Activated CD8-positive, alpha-beta T cell treated with anti-CD3 and anti-CD28 coated beads, Interleukin-2, amount 10 ng/mL, durations not matched to agents 7 days and 5 days (primary cell): ENCODE measurements at regions of chr2 and their contacts with region 1.

Region 1: DNA sequence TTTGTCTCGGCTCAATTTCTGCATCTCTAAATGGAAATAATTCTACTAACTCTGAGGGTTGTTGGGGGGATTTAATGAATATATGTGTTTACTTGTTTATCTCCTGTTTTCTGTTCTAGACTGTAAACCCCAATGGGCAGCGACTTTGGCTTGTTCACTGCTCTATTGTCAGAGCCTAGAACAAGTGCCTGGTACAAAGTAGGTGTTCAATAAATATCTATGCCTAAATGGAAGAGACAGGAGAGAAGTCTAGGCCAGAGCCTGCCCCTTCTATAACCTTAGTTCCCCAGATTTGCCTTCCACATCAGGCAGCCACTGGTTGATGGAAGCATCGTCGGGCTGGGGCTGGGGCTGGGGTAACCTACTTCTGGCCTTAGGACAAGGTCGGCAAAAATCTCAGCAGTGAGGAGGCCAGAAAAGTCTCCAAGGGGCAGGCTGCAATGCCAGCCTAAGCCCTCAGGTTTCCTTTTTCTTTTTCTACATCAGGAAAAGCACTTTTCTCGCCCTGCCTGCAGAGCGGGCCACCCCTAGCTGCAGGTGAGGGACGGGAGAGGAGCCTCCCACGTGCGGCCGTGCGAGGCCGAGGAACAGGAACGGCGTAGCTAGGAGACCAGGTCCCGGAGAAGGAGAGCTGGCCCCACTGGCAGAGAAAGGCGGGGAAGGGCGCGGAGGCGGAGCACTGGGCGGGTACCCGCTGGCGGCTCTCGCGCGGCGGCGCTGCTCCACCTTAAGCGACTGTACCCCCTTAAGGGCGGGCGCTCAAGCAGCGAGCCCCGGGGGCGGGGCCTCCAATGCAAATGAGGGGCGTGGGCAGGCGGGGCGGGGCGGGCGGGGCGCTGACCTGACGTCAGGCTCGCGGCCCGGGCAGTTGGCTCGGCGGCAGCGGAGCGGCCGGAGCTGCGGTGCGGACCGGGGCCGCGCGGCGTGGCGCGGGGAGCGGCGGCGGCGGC is at the start of gene CNNM4:
- DNase-seq: peak; percentile 94
- ATAC-seq: peak; percentile 96
- H3K4me3 Mint-ChIP-seq: peak within 1 kb of the TSS; percentile 78
- H3K27ac Mint-ChIP-seq: peak within 1 kb of the TSS; percentile 87
- H3K4me1 Mint-ChIP-seq: peaks cover 46% of the 10 kb centered on the region
- H3K27me3 Mint-ChIP-seq: no peaks in the 10 kb centered on the region
- total RNA-seq, gene CNNM4: 7.1 TPM

Region 2: GRCh38 chr2:96739633-96740428 is 20.5 kb before region 1 on chr2 and contains the start of gene LMAN2L:
- CTCF ChIA-PET with region 1: interaction called, 15 read pairs
- POLR2A ChIA-PET with region 1: interaction called, 3 read pairs
- DNase-seq: peak; percentile 100
- ATAC-seq: peak; percentile 100
- H3K4me3 Mint-ChIP-seq: peak within 1 kb of the TSS; percentile 92
- H3K27ac Mint-ChIP-seq: peak within 1 kb of the TSS; percentile 86
- H3K4me1 Mint-ChIP-seq: peaks cover 39% of the 10 kb centered on the region
- H3K27me3 Mint-ChIP-seq: no peaks in the 10 kb centered on the region
- total RNA-seq, gene LMAN2L: 7.4 to 7.9 TPM

Region 3: DNA sequence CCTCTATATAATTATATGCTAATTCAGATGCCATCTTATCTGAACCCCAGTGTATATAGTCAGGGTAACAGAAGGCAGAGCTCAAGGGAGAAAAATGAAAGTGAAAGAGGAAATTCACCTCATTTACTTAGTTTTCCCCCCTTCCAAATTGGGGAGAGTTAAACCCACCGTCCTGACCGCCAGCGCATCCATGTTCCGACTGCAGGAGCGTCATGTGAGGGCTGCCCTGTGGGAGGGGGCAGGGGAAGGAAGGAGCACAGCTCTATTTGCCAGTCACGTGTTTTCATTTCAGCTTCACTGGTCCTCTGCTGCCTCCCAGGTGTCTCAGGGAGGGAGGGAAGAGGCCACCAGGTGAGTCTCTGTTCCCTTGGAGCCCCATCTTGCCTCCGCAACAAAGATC is 13.6 kb after region 1 on chr2:
- CTCF ChIA-PET with region 1: interaction called, 112 read pairs
- POLR2A ChIA-PET with region 1: interaction called, 3 read pairs
- DNase-seq: peak; percentile 67
- ATAC-seq: peak; percentile 85
- H3K4me3 Mint-ChIP-seq: peak overlapping the region; percentile 74
- H3K27ac Mint-ChIP-seq: peak overlapping the region; percentile 80
- H3K4me1 Mint-ChIP-seq: peaks cover 22% of the 10 kb centered on the region
- H3K27me3 Mint-ChIP-seq: no peaks in the 10 kb centered on the region

Region 4: GRCh38 chr2:96801005-96801785 is 40.9 kb after region 1 on chr2:
- CTCF ChIA-PET with region 1: interaction called, 10 read pairs
- POLR2A ChIA-PET with region 1: no interaction called
- DNase-seq: peak; percentile 76
- ATAC-seq: peak; percentile 94
- H3K4me3 Mint-ChIP-seq: no peak overlapping the region
- H3K27ac Mint-ChIP-seq: no peak overlapping the region
- H3K4me1 Mint-ChIP-seq: peaks cover 2% of the 10 kb centered on the region
- H3K27me3 Mint-ChIP-seq: no peaks in the 10 kb centered on the region

Region 5: DNA sequence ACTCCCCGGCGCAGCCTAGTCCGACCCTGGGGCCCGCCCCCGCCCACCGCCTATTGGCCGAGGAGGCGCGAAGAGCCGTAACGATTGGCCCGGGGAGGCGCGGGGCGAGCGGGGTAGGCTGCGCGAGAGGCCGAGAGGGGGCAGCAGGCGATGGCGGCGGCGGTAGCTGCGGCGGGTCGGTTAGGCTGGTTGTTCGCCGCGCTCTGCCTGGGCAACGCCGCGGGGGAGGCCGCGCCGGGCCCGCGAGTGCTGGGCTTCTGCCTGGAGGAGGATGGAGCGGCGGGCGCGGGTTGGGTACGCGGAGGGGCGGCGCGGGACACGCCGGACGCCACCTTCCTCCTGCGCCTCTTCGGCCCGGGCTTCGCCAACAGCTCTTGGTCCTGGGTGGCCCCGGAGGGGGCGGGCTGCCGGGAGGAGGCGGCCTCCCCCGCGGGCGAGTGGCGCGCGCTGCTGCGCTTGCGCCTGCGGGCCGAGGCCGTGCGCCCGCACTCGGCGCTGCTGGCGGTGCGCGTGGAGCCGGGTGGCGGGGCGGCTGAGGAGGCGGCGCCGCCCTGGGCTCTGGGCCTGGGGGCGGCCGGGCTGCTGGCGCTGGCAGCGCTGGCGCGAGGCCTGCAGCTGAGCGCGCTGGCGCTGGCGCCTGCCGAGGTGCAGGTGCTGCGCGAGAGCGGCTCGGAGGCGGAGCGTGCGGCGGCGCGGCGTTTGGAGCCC is 56.0 kb after region 1 on chr2 and contains the start of gene CNNM3:
- CTCF ChIA-PET with region 1: interaction called, 27 read pairs
- POLR2A ChIA-PET with region 1: no interaction called
- DNase-seq: peak; percentile 96
- ATAC-seq: peak; percentile 95
- H3K4me3 Mint-ChIP-seq: peak within 1 kb of the TSS; percentile 89
- H3K27ac Mint-ChIP-seq: peak within 1 kb of the TSS; percentile 71
- H3K4me1 Mint-ChIP-seq: peaks cover 53% of the 10 kb centered on the region
- H3K27me3 Mint-ChIP-seq: no peaks in the 10 kb centered on the region
- total RNA-seq, gene CNNM3: 28.1 to 29.9 TPM